ENCODE measurements at regions of chr3 and their contacts with region 1.

Region 1: DNA sequence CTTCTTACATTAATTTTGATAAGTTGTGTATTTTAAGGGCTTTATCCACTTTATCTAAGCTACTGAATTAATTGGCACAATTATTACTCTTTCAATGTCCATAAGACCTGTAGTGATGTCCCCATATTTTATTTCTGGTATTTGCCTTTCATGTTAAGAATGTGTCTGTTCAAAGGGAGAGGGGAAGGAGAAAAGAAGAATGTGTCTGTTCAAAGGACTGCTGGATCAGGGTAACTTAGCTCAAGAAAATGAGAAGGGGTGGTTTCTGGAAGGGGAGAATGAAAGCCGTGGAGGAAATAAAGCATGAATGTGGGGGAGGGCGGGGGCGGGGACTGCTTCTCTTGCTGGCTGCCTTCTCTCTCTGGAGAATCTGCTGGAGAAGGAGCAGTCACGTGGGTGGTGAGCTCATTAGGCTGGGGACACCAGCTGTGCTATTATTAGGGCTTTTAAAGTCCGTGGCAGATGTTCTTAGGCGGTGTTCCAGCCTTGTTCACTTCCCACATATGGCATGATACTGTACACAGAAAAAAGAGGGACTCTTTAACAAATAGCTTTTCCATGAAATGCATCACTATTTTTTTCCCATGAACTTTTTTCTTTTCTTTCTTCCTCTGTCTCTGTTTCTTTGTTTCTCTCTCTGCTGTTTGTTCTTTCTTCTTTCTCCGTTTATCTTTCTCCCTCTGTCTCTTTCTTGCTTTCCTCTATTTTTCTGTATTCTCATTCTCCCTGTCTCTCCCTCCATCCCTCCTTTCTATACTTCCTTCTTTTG is 63.7 kb upstream of the ULK4 start:
- DNase-seq: peak; percentile 91
- ATAC-seq: peak; percentile 98

Region 2: GRCh38 chr3:41742127-41742526 is 283.4 kb before region 1 on chr3:
- intact Hi-C with region 1: no loop called
- DNase-seq: no peak
- ATAC-seq: no peak

Region 3: DNA sequence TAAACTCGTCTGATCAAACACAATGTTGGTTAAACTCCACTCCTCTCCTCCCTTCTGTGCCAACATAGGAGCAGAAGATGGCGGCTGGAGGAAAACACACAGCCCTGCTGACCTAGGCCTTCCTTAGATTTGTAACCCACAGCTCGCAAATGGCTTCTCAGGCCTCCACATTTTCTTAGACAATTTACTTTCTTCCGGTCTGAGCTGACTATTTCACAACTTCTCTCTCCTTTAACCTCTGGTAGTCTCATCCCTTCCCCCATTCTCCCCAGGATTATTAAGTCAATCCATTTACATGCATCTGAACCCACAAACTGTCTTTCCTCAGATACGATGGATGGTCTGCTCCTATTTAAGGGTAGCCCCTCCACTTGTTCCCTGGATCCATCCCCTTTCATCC is 37.9 kb before region 1 on chr3:
- intact Hi-C with region 1: no loop called
- DNase-seq: no peak
- ATAC-seq: no peak

Region 4: GRCh38 chr3:42061713-42062408 is 36.3 kb after region 1 on chr3:
- intact Hi-C with region 1: loop called (anchors 5 kb)
- DNase-seq: peak; percentile 86
- ATAC-seq: peak; percentile 89

Region 5: GRCh38 chr3:42071904-42072592 is 46.5 kb after region 1 on chr3:
- intact Hi-C with region 1: no loop called
- DNase-seq: peak; percentile 87
- ATAC-seq: peak; percentile 80

Measured in Right ventricle myocardium superior (tissue), 1 donor.